ENCODE measurements at regions of chr13 and their contacts with region 1.

Region 1: GRCh38 chr13:87274209-87274819 is 396.9 kb upstream of the SLITRK5 start:
- DNase-seq: peak; percentile 49
- ATAC-seq: peak; percentile 92
- H3K4me3 Mint-ChIP-seq: no peak overlapping the region
- H3K27ac Mint-ChIP-seq: no peak overlapping the region
- H3K4me1 Mint-ChIP-seq: peaks cover 9% of the 10 kb centered on the region
- H3K27me3 Mint-ChIP-seq: no peaks in the 10 kb centered on the region
- CTCF ChIP-seq: peak; percentile 60

Region 2: GRCh38 chr13:86870444-86870843 is 403.9 kb before region 1 on chr13:
- CTCF ChIA-PET with region 1: interaction called, 21 read pairs
- POLR2A ChIA-PET with region 1: no interaction called
- DNase-seq: no peak
- ATAC-seq: no peak
- H3K4me3 Mint-ChIP-seq: no peak overlapping the region
- H3K27ac Mint-ChIP-seq: no peak overlapping the region
- H3K4me1 Mint-ChIP-seq: no peaks in the 10 kb centered on the region
- H3K27me3 Mint-ChIP-seq: peaks cover 15% of the 10 kb centered on the region
- CTCF ChIP-seq: peak; percentile 30; the same call in 1 of the 2 replicates